Activated naive CD4-positive, alpha-beta T cell treated with anti-CD3 and anti-CD28 coated beads for 36 hours (primary cell): ENCODE measurements at regions of chr4 and their contacts with region 1.

Region 1: DNA sequence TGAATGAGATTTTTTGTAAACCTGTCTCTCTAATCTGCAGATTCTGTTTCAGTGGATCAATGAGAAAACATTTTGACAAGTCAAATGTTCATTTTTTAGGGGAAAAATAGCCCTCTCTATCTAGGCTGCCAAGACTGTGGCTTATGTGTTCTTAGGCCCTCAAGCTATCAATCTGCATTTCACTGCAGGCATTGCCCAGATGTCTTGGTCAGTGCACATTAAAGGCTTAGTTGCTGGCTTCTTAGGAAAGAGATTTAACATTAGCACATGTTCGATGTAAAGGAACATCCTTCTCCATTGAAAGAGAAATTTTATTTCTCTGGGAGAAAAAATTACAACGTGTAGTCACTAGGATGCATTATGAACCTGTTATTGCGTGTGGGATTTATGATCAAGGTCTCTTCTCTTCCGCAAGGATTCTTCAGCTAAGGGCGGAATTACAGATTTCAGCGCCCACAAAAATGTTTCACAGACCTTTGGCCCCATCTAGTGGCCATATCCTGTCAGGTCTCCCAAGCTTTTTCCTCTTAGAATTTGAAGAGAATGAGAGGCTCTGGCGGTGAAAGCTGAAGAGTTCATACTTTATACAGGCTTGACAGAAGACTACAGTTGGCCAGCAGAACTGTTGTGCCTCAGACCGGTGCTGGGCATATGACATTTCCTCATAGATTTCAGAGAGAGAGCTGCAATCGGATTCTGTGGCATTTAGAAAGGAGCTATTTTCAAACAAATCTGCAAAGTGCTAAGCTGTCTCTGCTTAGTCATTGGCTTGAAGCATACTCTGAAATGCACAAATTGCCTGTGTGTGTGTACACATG is 144.6 kb upstream of the NOCT start:
- DNase-seq: peak; percentile 69
- H3K4me3 Mint-ChIP-seq: no peak overlapping the region
- H3K27ac Mint-ChIP-seq: no peak overlapping the region
- H3K4me1 Mint-ChIP-seq: no peaks in the 10 kb centered on the region
- H3K27me3 Mint-ChIP-seq: peaks cover 9% of the 10 kb centered on the region

Region 2: GRCh38 chr4:137124278-137124932 is 1746.5 kb before region 1 on chr4:
- CTCF ChIA-PET with region 1: no interaction called
- intact Hi-C with region 1: loop called (anchors 5 kb)
- DNase-seq: no peak
- H3K4me3 Mint-ChIP-seq: no peak overlapping the region
- H3K27ac Mint-ChIP-seq: no peak overlapping the region
- H3K4me1 Mint-ChIP-seq: no peaks in the 10 kb centered on the region
- H3K27me3 Mint-ChIP-seq: no peaks in the 10 kb centered on the region

Region 3: DNA sequence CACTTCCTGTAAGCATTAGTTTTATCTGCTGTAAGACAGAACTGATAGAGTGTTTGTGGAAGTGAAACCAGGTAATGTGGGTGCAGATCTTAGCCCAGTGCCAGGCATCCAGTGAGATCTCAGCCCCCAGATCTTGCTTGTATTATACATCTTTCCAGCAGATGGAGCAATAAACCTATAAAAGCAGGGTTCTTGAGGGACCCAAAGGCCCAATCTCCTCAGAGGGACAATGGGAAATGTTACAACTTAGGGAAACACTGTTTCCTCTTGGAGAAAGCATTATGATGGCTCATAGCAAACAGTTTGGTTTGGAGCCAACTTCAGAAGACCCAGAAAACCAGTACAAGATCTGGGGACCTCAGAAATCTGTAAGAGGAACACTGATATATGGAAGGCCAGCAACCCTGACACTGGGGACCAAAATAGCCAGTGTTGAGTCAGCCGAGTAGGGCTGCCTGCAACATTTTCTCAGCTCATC is 835.1 kb before region 1 on chr4:
- CTCF ChIA-PET with region 1: no interaction called
- intact Hi-C with region 1: loop called (anchors 1 kb)
- DNase-seq: no peak
- H3K4me3 Mint-ChIP-seq: no peak overlapping the region
- H3K27ac Mint-ChIP-seq: no peak overlapping the region
- H3K4me1 Mint-ChIP-seq: no peaks in the 10 kb centered on the region
- H3K27me3 Mint-ChIP-seq: no peaks in the 10 kb centered on the region

Region 4: GRCh38 chr4:138090150-138090917 is 780.6 kb before region 1 on chr4:
- CTCF ChIA-PET with region 1: interaction called, 10 read pairs
- intact Hi-C with region 1: loop called (anchors 1 kb)
- DNase-seq: peak; percentile 55
- H3K4me3 Mint-ChIP-seq: no peak overlapping the region
- H3K27ac Mint-ChIP-seq: no peak overlapping the region
- H3K4me1 Mint-ChIP-seq: no peaks in the 10 kb centered on the region
- H3K27me3 Mint-ChIP-seq: no peaks in the 10 kb centered on the region

Region 5: GRCh38 chr4:138242076-138242833 is 628.7 kb before region 1 on chr4 and contains the start of gene SLC7A11:
- CTCF ChIA-PET with region 1: no interaction called
- intact Hi-C with region 1: loop called (anchors 10 kb)
- DNase-seq: peak; percentile 77
- H3K4me3 Mint-ChIP-seq: peak within 1 kb of the TSS; percentile 85
- H3K27ac Mint-ChIP-seq: peak within 1 kb of the TSS; percentile 92
- H3K4me1 Mint-ChIP-seq: peaks cover 11% of the 10 kb centered on the region
- H3K27me3 Mint-ChIP-seq: no peaks in the 10 kb centered on the region
- total RNA-seq, gene SLC7A11: 3.2 to 3.4 TPM

Region 6: GRCh38 chr4:138475116-138475515 is 395.8 kb before region 1 on chr4:
- CTCF ChIA-PET with region 1: no interaction called
- intact Hi-C with region 1: loop called (anchors 10 kb)
- DNase-seq: no peak
- H3K4me3 Mint-ChIP-seq: no peak overlapping the region
- H3K27ac Mint-ChIP-seq: no peak overlapping the region
- H3K4me1 Mint-ChIP-seq: no peaks in the 10 kb centered on the region
- H3K27me3 Mint-ChIP-seq: no peaks in the 10 kb centered on the region

Region 7: GRCh38 chr4:138938366-138938690 is 67.4 kb after region 1 on chr4:
- CTCF ChIA-PET with region 1: interaction called, 9 read pairs
- intact Hi-C with region 1: loop called (anchors 2 kb)
- DNase-seq: no peak
- H3K4me3 Mint-ChIP-seq: no peak overlapping the region
- H3K27ac Mint-ChIP-seq: no peak overlapping the region
- H3K4me1 Mint-ChIP-seq: no peaks in the 10 kb centered on the region
- H3K27me3 Mint-ChIP-seq: peaks cover 2% of the 10 kb centered on the region

Region 8: GRCh38 chr4:139188648-139189416 is 317.9 kb after region 1 on chr4:
- CTCF ChIA-PET with region 1: no interaction called
- intact Hi-C with region 1: no loop called
- DNase-seq: no peak
- H3K4me3 Mint-ChIP-seq: no peak overlapping the region
- H3K27ac Mint-ChIP-seq: no peak overlapping the region
- H3K4me1 Mint-ChIP-seq: peaks cover 3% of the 10 kb centered on the region
- H3K27me3 Mint-ChIP-seq: no peaks in the 10 kb centered on the region